A549 (cell line): ENCODE measurements at regions of chr10 and their contacts with region 1.

Region 1: GRCh38 chr10:103244663-103245271 is 920 bp upstream of the RPEL1 start:
- DNase-seq: peak; percentile 90 to 94
- ATAC-seq: peak; percentile 36 to 57; a peak in 4 of 6 replicates
- H3K4me3 ChIP-seq: no peak overlapping the region
- H3K27ac ChIP-seq: peak overlapping the region; percentile 96 to 100
- H3K4me1 ChIP-seq: peaks cover 40% of the 10 kb centered on the region
- CTCF ChIP-seq: peak; percentile 84
- EP300 ChIP-seq: no peak
- POLR2A ChIP-seq: no peak
- RAD21 ChIP-seq: peak; percentile 95 to 98

Region 2: DNA sequence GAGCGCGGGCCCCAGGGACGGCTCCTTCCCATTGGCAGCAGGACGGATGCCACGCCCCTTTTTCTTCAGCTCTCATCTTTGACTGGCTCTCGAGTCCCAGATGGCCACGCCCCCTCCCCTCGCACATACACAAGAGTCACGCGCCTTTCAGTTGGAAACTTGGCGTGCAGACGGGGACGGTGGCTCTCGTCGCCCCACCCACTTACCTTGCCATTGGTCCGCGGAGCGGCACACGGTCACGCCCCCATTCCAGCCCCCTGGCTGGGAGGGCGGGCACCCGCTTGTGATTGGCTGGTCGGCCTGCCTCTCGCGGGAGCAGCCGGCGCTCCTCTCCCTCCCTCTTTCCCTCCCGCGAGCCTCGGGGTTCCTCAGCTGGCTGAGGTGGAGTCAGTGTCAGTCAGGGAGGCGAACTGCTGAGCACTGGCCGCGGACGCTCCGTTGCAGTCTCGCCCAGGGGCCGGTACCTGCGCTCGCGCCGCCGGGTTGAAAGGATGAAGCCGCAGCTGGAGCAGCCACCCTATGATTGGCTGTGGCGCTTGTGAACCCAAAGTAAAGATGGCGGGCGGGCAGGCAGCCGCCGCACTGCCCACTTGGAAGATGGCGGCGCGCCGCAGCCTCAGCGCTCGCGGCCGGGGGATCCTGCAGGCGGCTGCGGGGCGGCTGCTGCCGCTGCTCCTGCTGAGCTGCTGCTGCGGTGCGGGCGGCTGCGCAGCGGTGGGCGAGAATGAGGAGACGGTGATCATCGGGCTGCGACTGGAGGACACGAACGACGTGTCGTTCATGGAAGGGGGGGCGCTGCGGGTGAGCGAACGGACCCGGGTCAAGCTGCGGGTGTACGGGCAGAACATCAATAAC is 326.6 kb before region 1 on chr10 and contains the start of gene CNNM2:
- CTCF ChIA-PET with region 1: interaction called, 16 read pairs
- POLR2A ChIA-PET with region 1: interaction called, 9 read pairs
- DNase-seq: peak; percentile 90 to 100
- ATAC-seq: peak; percentile 93
- H3K4me3 ChIP-seq: peak within 1 kb of the TSS; percentile 87
- H3K27ac ChIP-seq: peak within 1 kb of the TSS; percentile 85 to 93
- H3K4me1 ChIP-seq: peaks cover 28% of the 10 kb centered on the region
- CTCF ChIP-seq: 0 out of 3 replicates have a peak, but pooled peaks have one; percentile 27
- EP300 ChIP-seq: no peak
- POLR2A ChIP-seq: peak; percentile 63
- RAD21 ChIP-seq: peak in 1 of 2 experiments; percentile 48; a peak in 3 of 5 replicates
- polyA plus RNA-seq, gene CNNM2: 6.4 TPM in 2 replicates

Region 3: GRCh38 chr10:103104721-103105120 is 140.0 kb before region 1 on chr10:
- CTCF ChIA-PET with region 1: interaction called, 19 read pairs
- POLR2A ChIA-PET with region 1: interaction called, 4 read pairs
- DNase-seq: no peak
- ATAC-seq: no peak
- H3K4me3 ChIP-seq: no peak overlapping the region
- H3K27ac ChIP-seq: no peak overlapping the region
- H3K4me1 ChIP-seq: peaks cover 24% of the 10 kb centered on the region
- CTCF ChIP-seq: no peak
- EP300 ChIP-seq: no peak
- POLR2A ChIP-seq: no peak
- RAD21 ChIP-seq: no peak

Region 4: DNA sequence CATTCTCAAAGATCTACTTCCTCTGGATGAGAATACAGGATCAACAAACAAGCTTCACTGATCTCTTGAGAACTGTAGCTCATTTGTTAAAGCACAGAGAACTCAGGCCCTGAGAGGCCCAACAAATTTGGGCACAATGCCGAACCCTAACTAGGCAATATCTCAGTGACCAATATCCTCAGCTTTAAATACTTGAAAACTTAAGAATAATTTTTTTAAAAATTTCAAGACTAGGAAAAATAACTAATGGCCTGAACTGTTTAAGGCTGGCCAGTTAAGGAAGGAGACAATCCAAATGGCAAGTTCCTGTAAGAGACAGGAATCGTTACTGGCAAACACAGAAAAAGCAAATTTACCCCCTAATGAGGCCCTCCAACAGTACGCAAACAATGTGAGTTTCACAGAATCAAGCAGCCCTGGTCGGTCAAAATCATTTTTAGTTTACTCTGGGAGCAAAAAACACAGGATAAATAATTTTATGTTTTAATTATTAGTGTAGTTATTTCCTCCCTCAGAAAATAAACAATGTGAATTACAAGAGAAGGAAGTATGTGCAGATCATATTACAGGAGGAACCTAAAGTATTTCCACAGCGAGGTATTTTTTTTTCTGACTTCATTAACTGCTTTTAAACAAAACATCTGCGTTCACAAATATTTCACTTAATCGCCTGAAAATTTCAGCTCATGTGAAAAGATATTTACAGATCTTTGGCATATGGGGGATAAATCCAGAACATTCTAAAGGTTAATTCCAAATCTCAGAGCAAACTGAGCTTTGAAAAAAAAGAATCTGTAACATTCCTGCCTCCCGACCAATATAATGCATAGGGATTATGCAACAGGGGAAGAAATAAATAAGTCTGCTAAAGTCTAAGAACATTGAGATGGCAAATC is 91.2 kb before region 1 on chr10:
- CTCF ChIA-PET with region 1: interaction called, 21 read pairs
- POLR2A ChIA-PET with region 1: no interaction called
- DNase-seq: peak in 1 of 2 experiments; percentile 38
- ATAC-seq: peak; percentile 33 to 59; a peak in 3 of 6 replicates
- H3K4me3 ChIP-seq: peak overlapping the region; percentile 20; the same call in 2 of the 3 replicates
- H3K27ac ChIP-seq: peak overlapping the region; percentile 79 to 84
- H3K4me1 ChIP-seq: peaks cover 67% of the 10 kb centered on the region
- CTCF ChIP-seq: no peak
- EP300 ChIP-seq: no peak
- POLR2A ChIP-seq: no peak
- RAD21 ChIP-seq: no peak

Region 5: DNA sequence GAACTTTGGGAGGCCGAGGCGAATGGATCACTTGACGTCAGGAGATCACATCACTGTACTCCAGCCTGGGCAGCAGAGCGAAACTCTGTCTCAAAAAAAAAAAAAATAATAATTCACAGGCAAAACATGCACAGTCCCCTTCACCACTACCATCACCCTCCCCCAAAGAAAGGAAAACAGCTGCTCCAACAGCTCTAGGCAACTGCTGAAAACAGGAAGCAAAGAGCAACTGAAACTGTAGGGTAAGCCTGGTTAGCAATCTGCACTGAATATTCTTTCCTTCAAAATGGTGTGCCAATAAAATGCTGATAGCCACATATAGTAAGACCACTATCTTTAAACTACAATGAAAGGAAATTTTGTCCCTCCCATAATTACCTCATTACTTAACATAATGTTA is 63.5 kb before region 1 on chr10:
- CTCF ChIA-PET with region 1: interaction called, 20 read pairs
- POLR2A ChIA-PET with region 1: interaction called, 6 read pairs
- DNase-seq: no peak
- ATAC-seq: peak in 1 of 2 experiments; percentile 16; a peak in 2 of 6 replicates
- H3K4me3 ChIP-seq: no peak overlapping the region
- H3K27ac ChIP-seq: no peak overlapping the region
- H3K4me1 ChIP-seq: peaks cover 52% of the 10 kb centered on the region
- CTCF ChIP-seq: no peak
- EP300 ChIP-seq: no peak
- POLR2A ChIP-seq: no peak
- RAD21 ChIP-seq: no peak

Region 6: DNA sequence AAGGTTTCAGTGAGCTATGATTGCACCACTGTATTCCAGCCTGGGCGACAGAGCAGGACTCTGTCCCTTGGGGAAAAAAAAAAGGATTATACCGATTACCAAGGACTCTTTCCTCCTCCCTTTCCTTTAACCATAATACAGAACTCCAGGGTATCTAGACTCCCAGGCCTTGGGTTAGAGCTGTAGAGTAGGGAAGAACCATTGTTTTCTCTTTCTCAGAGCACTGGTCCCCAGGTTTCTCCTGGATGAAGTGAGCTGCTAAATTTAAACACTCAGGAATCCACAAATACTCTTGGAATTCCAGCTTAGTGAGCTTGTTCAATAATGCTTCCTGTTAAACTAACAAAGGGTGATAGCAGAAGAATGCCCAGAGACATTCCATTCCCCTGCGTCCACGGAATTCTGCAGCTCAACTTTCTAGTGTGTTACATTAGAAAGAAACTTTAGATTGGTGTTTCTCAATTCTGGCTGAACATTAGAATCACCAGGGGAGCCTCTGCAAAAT is 13.7 kb before region 1 on chr10:
- CTCF ChIA-PET with region 1: interaction called, 41 read pairs
- POLR2A ChIA-PET with region 1: interaction called, 60 read pairs
- DNase-seq: peak; percentile 57 to 96
- ATAC-seq: peak; percentile 92
- H3K4me3 ChIP-seq: no peak overlapping the region
- H3K27ac ChIP-seq: peak overlapping the region; percentile 93 to 96
- H3K4me1 ChIP-seq: peaks cover 74% of the 10 kb centered on the region
- CTCF ChIP-seq: no peak
- EP300 ChIP-seq: peak; percentile 83 to 94; a peak in 4 of 5 replicates
- POLR2A ChIP-seq: no peak
- RAD21 ChIP-seq: peak; percentile 32 to 50; a peak in 4 of 5 replicates

Region 7: DNA sequence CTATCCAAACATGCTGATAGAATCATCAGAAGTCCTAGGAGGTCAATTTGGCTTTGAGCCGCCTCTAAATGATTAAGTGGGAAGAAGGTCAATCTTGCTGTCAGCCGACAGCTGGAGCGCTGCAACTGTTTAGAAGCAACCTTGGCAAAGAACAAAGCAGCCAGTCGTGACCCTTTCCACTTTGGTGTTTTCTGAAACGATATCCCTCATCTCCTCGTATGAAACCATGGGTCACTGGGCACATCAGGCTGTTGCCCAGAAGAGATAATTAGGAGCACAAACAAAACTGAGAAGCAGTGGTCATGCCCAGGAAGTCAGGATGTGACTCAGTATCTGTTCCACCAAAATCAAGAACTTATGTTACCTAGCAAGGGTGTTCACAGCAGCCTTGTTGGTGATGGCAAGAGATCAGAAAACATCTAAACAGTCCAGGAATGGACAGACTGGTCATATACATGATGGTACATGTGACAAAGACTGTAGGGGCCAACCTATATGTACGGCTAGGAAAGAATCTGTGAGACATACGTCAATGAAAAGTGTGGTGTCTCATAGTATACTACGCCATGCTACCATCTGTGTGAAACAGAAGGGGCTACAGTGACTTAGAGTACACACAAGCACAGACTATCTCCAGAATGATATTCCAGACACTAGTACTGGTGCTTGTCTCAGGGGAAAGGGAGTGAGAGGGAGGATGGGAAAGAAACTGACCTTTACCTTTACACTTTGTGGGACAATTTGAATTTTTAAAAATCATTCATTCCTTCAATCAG is 650.8 kb after region 1 on chr10:
- CTCF ChIA-PET with region 1: no interaction called
- POLR2A ChIA-PET with region 1: no interaction called
- DNase-seq: peak in 1 of 2 experiments; percentile 45
- ATAC-seq: peak; percentile 51 to 76; a peak in 4 of 6 replicates
- H3K4me3 ChIP-seq: no peak overlapping the region
- H3K27ac ChIP-seq: peak overlapping the region; percentile 48 to 53
- H3K4me1 ChIP-seq: peaks cover 47% of the 10 kb centered on the region
- CTCF ChIP-seq: no peak
- EP300 ChIP-seq: no peak
- POLR2A ChIP-seq: no peak
- RAD21 ChIP-seq: no peak